ENCODE measurements at regions of chr3 and their contacts with region 1.

Region 1: DNA sequence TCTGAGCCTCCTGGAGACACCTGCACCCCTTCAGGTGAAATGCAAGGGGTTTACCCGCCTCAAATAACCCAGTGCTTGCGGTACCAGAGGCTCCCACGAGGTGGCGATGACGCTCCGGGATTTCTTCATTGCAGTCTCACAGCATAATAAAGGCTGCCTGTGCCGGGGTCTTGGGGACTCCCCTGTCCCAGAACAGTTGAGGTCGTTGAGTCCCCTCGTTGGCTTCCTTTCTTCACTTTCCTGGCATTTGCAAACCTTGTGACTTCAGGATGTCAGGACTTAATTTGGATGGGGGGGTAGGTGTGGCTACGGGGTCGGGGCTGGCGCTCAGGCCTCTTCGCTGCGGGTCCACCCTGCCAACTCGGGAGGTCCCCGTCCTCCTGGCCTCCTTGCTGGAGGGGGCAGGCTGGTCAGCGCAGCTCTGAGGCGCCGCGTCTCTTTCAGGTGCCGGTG is 1.3 kb downstream of the GNAT1 start:
- DNase-seq: peak; percentile 49 to 75 (median 56)
- ATAC-seq: peak; percentile 56
- H3K4me3 ChIP-seq: no peak overlapping the region
- H3K27ac ChIP-seq: no peak overlapping the region
- H3K4me1 ChIP-seq: peaks cover 2 to 33% of the 10 kb centered on the region in 2 experiments; a peak in 2 of 5 replicates
- H3K27me3 ChIP-seq: peaks cover 0 to 15% of the 10 kb centered on the region in 2 experiments; a peak in 2 of 5 replicates
- CTCF ChIP-seq: peak; percentile 80 to 83 (median 80)
- EP300 ChIP-seq: no peak
- POLR2A ChIP-seq: no peak
- RAD21 ChIP-seq: peak; percentile 56 to 75

Region 2: DNA sequence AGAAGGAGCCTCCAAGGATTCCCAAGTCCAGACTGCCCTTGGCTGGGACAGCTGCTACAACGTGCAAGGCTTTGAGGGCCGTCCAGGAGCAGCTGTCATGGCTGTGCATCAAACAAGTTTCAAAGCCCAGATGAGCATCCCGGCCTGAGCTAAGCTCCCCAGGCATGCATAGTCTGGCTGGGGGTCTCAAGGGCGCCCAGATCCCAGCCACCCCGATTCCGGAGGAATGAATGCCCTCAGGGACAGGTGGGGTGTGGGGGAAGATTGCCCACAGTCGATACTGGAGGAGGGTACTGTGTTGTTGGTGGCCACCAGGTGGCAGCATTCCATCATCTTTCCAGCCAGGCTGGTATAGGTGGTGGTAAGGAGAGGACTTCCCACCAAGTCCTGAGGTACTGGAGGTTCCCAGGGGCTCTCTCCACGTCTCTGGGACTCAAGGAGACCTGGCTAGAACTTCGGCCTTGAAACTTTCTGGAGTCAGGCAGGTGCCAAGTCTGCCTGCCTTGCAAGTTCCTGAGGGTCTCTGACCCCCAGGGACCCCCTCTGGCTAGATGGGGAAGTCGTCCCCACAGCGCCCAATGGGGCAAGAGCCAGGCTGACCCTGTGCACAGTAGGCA is 71.2 kb before region 1 on chr3:
- CTCF ChIA-PET with region 1: interaction called, 34 read pairs
- POLR2A ChIA-PET with region 1: interaction called, 3 read pairs
- in situ Hi-C with region 1: no loop called
- intact Hi-C with region 1: loop called (anchors 1 kb)
- DNase-seq: peak; percentile 77 to 83 (median 80)
- ATAC-seq: peak; percentile 96
- H3K4me3 ChIP-seq: no peak overlapping the region
- H3K27ac ChIP-seq: no peak overlapping the region
- H3K4me1 ChIP-seq: peaks cover 0 to 9% of the 10 kb centered on the region in 2 experiments; a peak in 2 of 5 replicates
- H3K27me3 ChIP-seq: no peaks in the 10 kb centered on the region
- CTCF ChIP-seq: peak; percentile 68 to 83 (median 80)
- EP300 ChIP-seq: no peak
- POLR2A ChIP-seq: peak; percentile 56; the same call in 1 of the 2 replicates
- RAD21 ChIP-seq: peak; percentile 56 to 81

Region 3: DNA sequence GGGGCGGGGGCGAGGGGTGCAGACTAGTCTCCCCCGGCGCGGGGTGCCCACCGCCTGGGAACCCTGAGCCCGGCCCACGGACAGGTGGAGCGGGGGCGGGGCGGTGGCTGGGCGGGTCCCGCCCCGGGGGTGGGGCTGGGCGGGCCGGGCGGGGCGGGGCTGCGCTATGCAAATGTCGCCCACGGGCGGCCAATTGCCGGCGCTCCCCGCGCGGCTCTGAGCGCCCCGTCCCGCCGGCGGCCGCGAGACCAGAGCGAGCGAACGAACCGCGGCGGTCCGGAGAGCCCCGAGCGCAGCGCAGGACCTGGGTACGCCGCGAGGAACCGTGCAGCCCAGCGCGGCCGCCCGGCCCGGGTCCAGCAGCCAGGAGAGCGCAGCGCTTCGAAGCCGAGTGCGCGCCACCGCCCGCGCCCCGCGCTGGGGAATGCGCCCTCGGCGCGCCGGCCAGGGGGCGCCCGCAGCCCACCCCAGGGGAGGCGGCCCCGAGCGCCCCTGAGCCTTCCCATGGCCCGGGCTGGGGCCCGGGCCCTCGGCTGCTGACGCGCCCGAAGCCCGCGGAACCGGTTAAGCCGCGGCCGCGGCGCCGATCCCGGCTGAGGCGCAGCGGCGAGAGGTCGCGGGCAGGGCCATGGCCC is 37.8 kb before region 1 on chr3 and contains the start of gene SEMA3F:
- CTCF ChIA-PET with region 1: interaction called, 8 read pairs
- POLR2A ChIA-PET with region 1: no interaction called
- in situ Hi-C with region 1: no loop called
- intact Hi-C with region 1: loop called (anchors 2 kb)
- DNase-seq: peak; percentile 74 to 92 (median 92)
- ATAC-seq: peak; percentile 91
- H3K4me3 ChIP-seq: peak within 1 kb of the TSS; percentile 49
- H3K27ac ChIP-seq: no peak within 1 kb of the TSS
- H3K4me1 ChIP-seq: peaks cover 0 to 42% of the 10 kb centered on the region in 2 experiments; a peak in 3 of 5 replicates
- H3K27me3 ChIP-seq: no peaks in the 10 kb centered on the region
- CTCF ChIP-seq: peak in 2 of 3 experiments; percentile 28 to 35; a peak in 2 of 6 replicates
- EP300 ChIP-seq: no peak
- POLR2A ChIP-seq: no peak
- RAD21 ChIP-seq: peak in 1 of 2 experiments; percentile 50; a peak in 2 of 4 replicates
- polyA plus RNA-seq, gene SEMA3F: not detected

Region 4: DNA sequence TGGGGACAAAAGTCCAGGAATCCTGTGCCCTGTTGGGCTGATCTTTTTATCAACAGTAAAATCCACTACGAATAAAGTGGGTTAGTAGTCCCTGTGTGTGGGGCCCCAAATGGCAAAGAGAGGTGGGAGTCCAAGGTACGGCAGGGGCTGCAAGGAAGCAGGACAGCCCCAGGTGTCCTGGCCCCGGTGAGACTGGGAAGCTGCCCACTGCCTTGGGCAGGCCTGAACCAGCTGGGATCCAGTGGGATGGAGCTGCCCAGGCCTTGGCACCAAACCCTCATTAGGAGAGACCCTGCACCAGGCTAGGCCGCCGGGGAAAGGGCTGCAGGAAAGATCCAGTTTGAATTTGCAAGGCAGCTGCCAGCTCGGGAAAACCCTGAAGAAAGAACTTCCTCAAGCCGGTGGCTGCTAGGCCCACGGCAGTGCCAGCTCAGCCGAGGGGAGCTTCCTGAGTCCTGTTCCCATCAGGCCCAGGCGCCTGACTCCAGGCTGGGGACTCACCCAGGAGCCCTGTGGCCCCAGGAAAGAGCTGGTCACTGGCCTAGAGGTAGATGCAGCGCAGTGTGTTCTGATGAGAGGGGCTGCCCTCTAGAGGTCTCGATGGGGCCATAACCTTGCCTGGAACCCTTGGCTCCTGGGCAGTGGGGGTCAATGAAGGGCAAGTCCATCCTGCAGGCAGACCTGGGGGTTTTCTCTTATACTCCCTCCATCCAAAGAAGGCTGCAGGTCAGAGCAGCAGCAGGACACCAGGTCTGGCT is 28.9 kb after region 1 on chr3:
- CTCF ChIA-PET with region 1: interaction called, 91 read pairs
- POLR2A ChIA-PET with region 1: interaction called, 3 read pairs
- in situ Hi-C with region 1: loop called (anchors 5 kb)
- intact Hi-C with region 1: loop called (anchors 1 kb)
- DNase-seq: peak in 2 of 4 experiments; percentile 27 to 33
- ATAC-seq: peak; percentile 57
- H3K4me3 ChIP-seq: no peak overlapping the region
- H3K27ac ChIP-seq: no peak overlapping the region
- H3K4me1 ChIP-seq: peaks cover 0 to 12% of the 10 kb centered on the region in 2 experiments; a peak in 4 of 5 replicates
- H3K27me3 ChIP-seq: peaks cover 3 to 19% of the 10 kb centered on the region in 2 experiments; a peak in 2 of 5 replicates
- CTCF ChIP-seq: peak; percentile 37 to 44 (median 41); a peak in 5 of 6 replicates
- EP300 ChIP-seq: no peak
- POLR2A ChIP-seq: no peak
- RAD21 ChIP-seq: peak in 1 of 2 experiments; percentile 20; a peak in 1 of 4 replicates

Region 5: GRCh38 chr3:50227390-50228183 is 34.9 kb after region 1 on chr3:
- CTCF ChIA-PET with region 1: interaction called, 91 read pairs
- POLR2A ChIA-PET with region 1: interaction called, 3 read pairs
- in situ Hi-C with region 1: loop called (anchors 5 kb)
- intact Hi-C with region 1: loop called (anchors 1 kb)
- DNase-seq: peak; percentile 88 to 96 (median 90)
- ATAC-seq: peak; percentile 94
- H3K4me3 ChIP-seq: peak overlapping the region; percentile 47
- H3K27ac ChIP-seq: peak overlapping the region; percentile 82
- H3K4me1 ChIP-seq: peaks cover 18 to 43% of the 10 kb centered on the region in 2 experiments
- H3K27me3 ChIP-seq: no peaks in the 10 kb centered on the region
- CTCF ChIP-seq: peak; percentile 64 to 94 (median 84)
- EP300 ChIP-seq: no peak
- POLR2A ChIP-seq: 0 out of 2 replicates have a peak, but pooled peaks have one; percentile 48
- RAD21 ChIP-seq: peak; percentile 96 to 97

Region 6: GRCh38 chr3:50272911-50273693 is 80.4 kb after region 1 on chr3:
- CTCF ChIA-PET with region 1: interaction called, 34 read pairs
- POLR2A ChIA-PET with region 1: interaction called, 3 read pairs
- in situ Hi-C with region 1: loop called (anchors 5 kb)
- intact Hi-C with region 1: loop called (anchors 1 kb)
- DNase-seq: peak; percentile 87 to 92 (median 88)
- ATAC-seq: peak; percentile 90
- H3K4me3 ChIP-seq: peak overlapping the region; percentile 28
- H3K27ac ChIP-seq: no peak overlapping the region
- H3K4me1 ChIP-seq: peaks cover 4 to 61% of the 10 kb centered on the region in 2 experiments; a peak in 3 of 5 replicates
- H3K27me3 ChIP-seq: no peaks in the 10 kb centered on the region
- CTCF ChIP-seq: peak; percentile 89 to 94 (median 94)
- EP300 ChIP-seq: no peak
- POLR2A ChIP-seq: no peak
- RAD21 ChIP-seq: peak; percentile 97 to 98

Region 7: DNA sequence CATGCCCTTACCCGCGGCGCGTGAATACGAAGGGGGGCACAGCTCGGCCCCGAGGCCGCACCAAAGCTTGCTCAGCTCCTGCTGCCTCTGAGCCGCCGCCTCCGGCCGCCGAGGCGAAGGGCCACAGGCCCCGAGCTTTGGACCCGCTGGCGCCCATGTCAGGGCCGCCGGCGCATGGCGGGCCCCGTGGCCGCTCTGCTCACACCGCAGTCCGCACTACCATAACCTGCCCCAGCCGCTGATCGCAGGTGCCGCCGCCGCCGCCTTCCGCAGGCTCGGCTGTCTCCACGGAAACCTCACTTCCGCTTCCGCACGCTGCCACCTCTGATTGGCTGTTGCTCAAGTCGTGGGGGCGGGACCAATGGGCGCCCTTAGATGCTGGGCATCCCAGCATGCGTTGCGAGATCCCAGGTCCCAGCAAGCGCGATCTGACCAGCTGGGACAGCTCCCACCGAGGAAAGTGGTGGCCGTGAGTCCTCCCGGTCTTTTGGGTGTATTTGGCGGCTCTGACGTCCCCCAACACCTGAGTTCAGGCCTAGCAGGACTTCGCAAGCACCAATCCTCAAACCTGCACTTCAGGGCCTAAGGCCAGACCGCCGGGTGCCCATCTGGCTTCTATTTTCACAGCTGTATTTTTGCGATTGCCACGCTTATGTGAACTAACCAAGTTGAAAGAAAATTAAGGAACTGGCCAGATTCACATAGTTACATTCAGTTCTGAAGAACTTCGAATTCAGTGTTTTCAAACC is 135.4 kb after region 1 on chr3 and contains the start of gene TUSC2:
- CTCF ChIA-PET with region 1: no interaction called
- POLR2A ChIA-PET with region 1: no interaction called
- in situ Hi-C with region 1: no loop called
- intact Hi-C with region 1: loop called (anchors 2 kb)
- DNase-seq: peak; percentile 88 to 97 (median 92)
- ATAC-seq: peak; percentile 91
- H3K4me3 ChIP-seq: peak within 1 kb of the TSS; percentile 84
- H3K27ac ChIP-seq: peak within 1 kb of the TSS; percentile 54
- H3K4me1 ChIP-seq: peaks cover 12 to 25% of the 10 kb centered on the region in 2 experiments; a peak in 4 of 5 replicates
- H3K27me3 ChIP-seq: no peaks in the 10 kb centered on the region
- CTCF ChIP-seq: no peak
- EP300 ChIP-seq: no peak
- POLR2A ChIP-seq: peak; percentile 63; the same call in 1 of the 2 replicates
- RAD21 ChIP-seq: no peak
- polyA plus RNA-seq, gene TUSC2: 2.8 to 4.4 TPM

Region 8: DNA sequence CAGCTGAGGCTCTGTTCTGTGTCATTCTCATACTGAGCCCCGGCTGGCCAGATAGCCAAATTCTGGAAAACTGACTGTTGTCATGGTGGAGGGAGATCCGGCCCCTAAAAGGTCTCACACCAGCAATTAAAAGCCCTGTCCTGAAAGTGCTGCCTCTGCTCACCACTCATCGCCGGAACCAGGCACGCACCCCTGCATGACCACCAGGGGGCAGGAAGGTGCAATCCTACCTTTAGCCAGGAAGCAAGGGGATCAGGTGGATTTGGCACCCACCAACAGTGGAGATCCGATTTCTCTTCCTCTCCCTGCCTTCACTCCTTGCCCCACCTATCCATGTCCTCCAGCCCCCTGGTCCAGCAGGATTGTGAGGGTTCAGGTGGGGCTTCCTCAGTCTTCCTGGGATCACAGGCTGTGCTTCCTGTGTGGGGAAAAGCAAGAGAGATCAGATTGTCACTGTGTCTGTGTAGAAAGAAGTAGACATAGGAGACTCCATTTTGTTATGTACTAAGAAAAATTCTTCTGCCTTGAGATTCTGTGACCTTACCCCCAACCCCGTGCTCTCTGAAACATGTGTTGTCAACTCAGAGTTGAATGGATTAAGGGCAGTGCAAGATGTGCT is 326.9 kb after region 1 on chr3:
- CTCF ChIA-PET with region 1: no interaction called
- POLR2A ChIA-PET with region 1: no interaction called
- in situ Hi-C with region 1: no loop called
- intact Hi-C with region 1: no loop called
- DNase-seq: peak; percentile 71 to 80 (median 74)
- ATAC-seq: peak; percentile 93
- H3K4me3 ChIP-seq: no peak overlapping the region
- H3K27ac ChIP-seq: no peak overlapping the region
- H3K4me1 ChIP-seq: peaks cover 0 to 14% of the 10 kb centered on the region in 2 experiments; a peak in 3 of 5 replicates
- H3K27me3 ChIP-seq: peaks cover 0 to 4% of the 10 kb centered on the region in 2 experiments; a peak in 2 of 5 replicates
- CTCF ChIP-seq: peak; percentile 86 to 90 (median 87)
- EP300 ChIP-seq: no peak
- POLR2A ChIP-seq: no peak
- RAD21 ChIP-seq: peak; percentile 77 to 90

Measured in K562 (cell line).